ENCODE measurements at regions of chr17 and their contacts with region 1.

Region 1: GRCh38 chr17:2179615-2180295 is 123.8 kb downstream of the SMG6 start:
- DNase-seq: peak; percentile 86 to 91 (median 86)
- ATAC-seq: peak; percentile 80 to 82
- H3K4me3 ChIP-seq: no peak overlapping the region
- H3K27ac ChIP-seq: peak overlapping the region; percentile 59
- H3K4me1 ChIP-seq: peaks cover 40% of the 10 kb centered on the region
- H3K27me3 ChIP-seq: no peaks in the 10 kb centered on the region

Region 2: DNA sequence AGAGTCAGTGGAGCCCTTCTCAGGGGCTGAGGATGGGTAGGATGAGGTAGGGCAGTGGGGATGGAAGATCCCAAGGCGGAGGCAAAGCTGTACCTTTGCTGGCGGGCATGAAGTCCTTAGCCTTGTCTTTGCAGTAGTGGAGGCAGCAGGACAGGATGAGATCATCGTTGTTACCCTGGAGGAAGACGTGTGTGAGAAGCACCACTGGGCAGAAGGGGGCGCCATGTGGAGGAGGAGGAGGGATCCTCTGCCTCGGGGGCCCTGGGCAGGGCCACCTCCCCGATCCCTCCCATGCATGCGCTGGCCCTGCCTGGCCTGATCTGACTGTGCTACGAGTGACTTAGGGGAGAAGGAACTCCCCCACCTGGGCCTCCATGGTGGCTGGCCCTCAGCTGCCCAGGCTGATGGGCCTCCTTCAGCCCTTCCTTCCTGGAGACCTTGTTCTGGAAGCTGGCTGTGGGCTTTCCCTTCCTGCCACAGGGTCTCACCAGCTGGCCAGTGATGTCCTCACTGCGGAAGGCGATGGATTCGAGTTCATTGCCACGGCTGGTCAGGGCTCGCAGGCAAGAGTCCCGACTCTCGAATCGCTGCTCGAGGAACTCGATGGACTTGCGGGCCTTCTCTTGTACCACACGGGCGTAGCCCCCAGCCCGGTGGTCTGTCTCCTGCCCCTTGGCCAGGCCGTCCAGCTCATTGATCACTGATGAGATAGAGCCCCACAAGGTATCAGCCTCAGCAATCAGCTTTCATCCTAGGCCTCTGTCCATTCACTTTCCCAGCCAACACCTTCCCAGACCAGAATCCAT is 114.6 kb before region 1 on chr17:
- intact Hi-C with region 1: loop called in 2 of 4 experiments (anchors 5 kb)
- DNase-seq: peak; percentile 76 to 87 (median 84)
- ATAC-seq: peak in 1 of 2 donors; percentile 3
- H3K4me3 ChIP-seq: no peak overlapping the region
- H3K27ac ChIP-seq: peak overlapping the region; percentile 68
- H3K4me1 ChIP-seq: peaks cover 13% of the 10 kb centered on the region
- H3K27me3 ChIP-seq: no peaks in the 10 kb centered on the region

Region 3: DNA sequence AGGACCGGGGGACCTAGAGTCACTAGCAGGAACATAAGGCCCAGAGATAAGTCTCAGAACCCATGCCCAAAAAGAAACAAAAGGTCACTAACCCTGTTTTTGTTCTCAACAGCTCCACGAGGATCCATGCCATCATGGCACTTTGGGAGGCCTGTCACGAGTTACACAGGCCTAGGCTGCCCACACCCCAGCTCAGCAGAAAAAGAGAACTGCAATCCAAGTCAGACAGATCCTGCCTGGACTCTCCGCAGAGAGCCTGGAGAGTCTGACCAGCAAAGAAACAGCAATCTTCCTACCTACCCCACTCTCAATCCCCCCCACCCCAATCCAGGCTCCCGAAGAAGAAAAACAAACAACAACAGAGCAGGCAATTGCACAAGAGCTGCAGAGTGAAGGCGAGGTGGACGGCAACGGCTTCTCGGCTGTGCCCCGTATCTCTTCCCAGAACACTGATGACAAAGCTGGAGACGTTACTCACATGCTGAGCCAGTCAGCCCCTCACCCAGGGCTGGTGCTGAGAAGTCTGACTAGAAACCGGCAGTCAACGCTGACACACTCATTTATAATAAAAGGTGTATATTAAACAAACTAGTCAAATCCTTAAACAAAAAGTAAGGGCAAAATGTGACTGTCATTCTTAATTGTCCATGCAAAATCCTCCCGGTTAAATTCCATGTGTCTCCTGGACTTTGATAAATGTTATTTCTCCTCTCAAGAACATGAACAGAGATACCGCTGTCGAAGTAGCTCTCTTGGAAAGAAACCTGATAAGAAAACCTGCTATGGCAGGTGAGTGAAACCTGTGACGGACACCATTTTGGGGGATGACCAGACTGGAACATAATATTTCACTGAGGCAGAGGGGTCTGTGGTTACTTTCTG is 34.5 kb after region 1 on chr17:
- intact Hi-C with region 1: loop called in 3 of 4 experiments (anchors 2 to 5 kb)
- DNase-seq: peak; percentile 68 to 85 (median 81)
- ATAC-seq: peak; percentile 82 to 86
- H3K4me3 ChIP-seq: no peak overlapping the region
- H3K27ac ChIP-seq: peak overlapping the region; percentile 99
- H3K4me1 ChIP-seq: peaks cover 10% of the 10 kb centered on the region
- H3K27me3 ChIP-seq: no peaks in the 10 kb centered on the region

Region 4: GRCh38 chr17:2227025-2227699 is 47.4 kb after region 1 on chr17:
- intact Hi-C with region 1: no loop called
- DNase-seq: no peak
- ATAC-seq: no peak
- H3K4me3 ChIP-seq: no peak overlapping the region
- H3K27ac ChIP-seq: no peak overlapping the region
- H3K4me1 ChIP-seq: no peaks in the 10 kb centered on the region
- H3K27me3 ChIP-seq: no peaks in the 10 kb centered on the region

Region 5: DNA sequence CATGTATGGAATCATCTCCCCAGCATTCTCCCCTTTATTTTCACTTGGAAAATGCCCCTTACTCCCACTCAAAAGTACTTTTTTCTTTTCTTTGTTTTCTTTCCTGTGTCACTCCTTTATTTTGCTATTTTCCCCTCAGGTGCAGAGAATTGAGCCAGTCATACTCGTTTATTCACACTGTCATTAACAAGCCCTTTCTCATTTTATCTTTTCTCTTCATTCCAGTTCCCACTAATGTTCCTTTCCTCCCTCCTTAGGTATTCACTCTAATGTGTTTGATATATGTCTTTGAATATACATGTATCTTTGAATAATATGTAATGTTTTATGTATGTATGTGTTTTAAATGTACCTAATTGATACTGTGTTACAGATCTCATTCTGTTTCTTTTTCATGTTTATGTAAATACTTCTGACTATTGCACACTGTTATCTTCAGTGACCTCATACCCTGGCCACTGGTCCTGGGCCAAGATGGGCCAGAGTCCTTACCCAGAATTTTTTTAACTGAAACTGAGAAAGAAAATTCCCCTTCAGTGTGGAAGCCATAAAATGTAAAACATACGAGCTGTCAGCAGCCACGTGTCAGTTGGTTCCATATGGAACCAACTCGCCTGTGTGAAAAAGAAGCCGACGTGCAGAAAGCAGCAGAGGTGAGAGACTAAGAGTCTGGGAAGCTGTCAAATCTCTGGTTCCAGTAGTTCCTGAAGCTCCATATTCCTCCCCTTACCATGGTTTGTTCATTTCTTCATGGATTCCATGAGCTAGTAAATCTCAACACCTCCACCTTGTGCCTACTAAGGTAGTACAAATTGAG is 129.8 kb after region 1 on chr17:
- intact Hi-C with region 1: no loop called
- DNase-seq: peak; percentile 49 to 79 (median 73)
- ATAC-seq: peak; percentile 53 to 62
- H3K4me3 ChIP-seq: no peak overlapping the region
- H3K27ac ChIP-seq: no peak overlapping the region
- H3K4me1 ChIP-seq: no peaks in the 10 kb centered on the region
- H3K27me3 ChIP-seq: no peaks in the 10 kb centered on the region

Measured in right cardiac atrium (tissue), 5 donors.